AG04449 (cell line): ENCODE measurements at regions of chr1 and their contacts with region 1.

Region 1: GRCh38 chr1:153749408-153750005 is 21.7 kb downstream of the INTS3 start:
- DNase-seq: peak; percentile 31
- H3K4me3 ChIP-seq: no peak overlapping the region
- CTCF ChIP-seq: peak; percentile 98

Region 2: DNA sequence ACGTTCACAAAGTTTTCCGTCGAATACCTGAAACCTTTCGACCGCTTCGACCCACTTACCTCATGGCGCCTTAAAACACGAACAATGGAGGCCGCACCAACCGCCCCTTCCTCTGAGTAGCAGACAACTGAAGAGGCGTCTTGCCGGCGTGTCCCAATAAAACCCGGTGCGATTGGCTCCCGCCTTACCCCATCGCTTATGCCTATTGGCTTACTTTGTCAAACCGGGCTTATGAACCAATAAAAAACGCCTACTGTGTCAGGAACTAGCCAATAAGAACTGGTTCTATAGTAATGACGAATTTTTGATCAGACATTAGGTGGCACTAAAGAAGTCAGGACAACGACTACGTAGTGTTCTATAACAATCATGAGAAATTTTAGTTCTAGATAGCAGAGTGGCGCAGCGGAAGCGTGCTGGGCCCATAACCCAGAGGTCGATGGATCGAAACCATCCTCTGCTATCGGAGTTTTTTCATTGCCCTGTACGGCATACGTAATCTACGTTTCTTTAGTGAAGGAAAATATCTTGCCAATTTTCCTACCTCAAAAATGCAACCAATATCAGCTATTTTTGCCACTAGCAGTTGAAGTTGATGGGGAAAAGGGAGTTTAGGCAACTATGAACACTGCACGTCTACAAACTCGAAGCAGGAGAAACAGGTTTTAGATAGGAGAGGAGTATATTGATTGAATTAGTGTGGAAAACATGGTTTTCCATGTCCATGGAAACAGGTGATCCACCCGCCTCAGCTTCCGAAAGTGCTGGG is 78.5 kb before region 1 on chr1 and contains the start of gene ILF2:
- CTCF ChIA-PET with region 1: interaction called, 118 read pairs
- POLR2A ChIA-PET with region 1: no interaction called
- DNase-seq: peak; percentile 100
- H3K4me3 ChIP-seq: peak within 1 kb of the TSS; percentile 89
- CTCF ChIP-seq: peak; percentile 3

Region 3: GRCh38 chr1:153677718-153678505 is 71.6 kb before region 1 on chr1:
- CTCF ChIA-PET with region 1: interaction called, 118 read pairs
- POLR2A ChIA-PET with region 1: no interaction called
- DNase-seq: no peak
- H3K4me3 ChIP-seq: peak overlapping the region; percentile 39
- CTCF ChIP-seq: peak; percentile 92

Region 4: GRCh38 chr1:153763365-153764225 is 14.1 kb after region 1 on chr1:
- CTCF ChIA-PET with region 1: interaction called, 20 read pairs
- POLR2A ChIA-PET with region 1: no interaction called
- DNase-seq: no peak
- H3K4me3 ChIP-seq: no peak overlapping the region
- CTCF ChIP-seq: no peak

Region 5: DNA sequence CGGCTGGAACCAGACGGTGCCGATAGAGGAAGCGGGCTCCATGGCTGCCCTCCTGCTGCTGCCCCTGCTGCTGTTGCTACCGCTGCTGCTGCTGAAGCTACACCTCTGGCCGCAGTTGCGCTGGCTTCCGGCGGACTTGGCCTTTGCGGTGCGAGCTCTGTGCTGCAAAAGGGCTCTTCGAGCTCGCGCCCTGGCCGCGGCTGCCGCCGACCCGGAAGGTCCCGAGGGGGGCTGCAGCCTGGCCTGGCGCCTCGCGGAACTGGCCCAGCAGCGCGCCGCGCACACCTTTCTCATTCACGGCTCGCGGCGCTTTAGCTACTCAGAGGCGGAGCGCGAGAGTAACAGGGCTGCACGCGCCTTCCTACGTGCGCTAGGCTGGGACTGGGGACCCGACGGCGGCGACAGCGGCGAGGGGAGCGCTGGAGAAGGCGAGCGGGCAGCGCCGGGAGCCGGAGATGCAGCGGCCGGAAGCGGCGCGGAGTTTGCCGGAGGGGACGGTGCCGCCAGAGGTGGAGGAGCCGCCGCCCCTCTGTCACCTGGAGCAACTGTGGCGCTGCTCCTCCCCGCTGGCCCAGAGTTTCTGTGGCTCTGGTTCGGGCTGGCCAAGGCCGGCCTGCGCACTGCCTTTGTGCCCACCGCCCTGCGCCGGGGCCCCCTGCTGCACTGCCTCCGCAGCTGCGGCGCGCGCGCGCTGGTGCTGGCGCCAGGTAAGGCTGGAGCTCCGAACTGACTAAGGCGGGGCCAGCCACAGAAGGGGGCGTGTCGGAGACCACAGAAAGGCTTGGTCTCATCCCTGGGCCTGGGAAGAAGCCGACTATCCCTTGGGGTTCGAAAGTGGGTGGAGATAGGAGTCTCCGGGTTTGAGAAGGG is 26.2 kb after region 1 on chr1:
- CTCF ChIA-PET with region 1: interaction called, 17 read pairs
- POLR2A ChIA-PET with region 1: no interaction called
- DNase-seq: no peak
- H3K4me3 ChIP-seq: peak overlapping the region; percentile 64
- CTCF ChIP-seq: no peak